ENCODE measurements at regions of chr4 and their contacts with region 1.

Region 1: DNA sequence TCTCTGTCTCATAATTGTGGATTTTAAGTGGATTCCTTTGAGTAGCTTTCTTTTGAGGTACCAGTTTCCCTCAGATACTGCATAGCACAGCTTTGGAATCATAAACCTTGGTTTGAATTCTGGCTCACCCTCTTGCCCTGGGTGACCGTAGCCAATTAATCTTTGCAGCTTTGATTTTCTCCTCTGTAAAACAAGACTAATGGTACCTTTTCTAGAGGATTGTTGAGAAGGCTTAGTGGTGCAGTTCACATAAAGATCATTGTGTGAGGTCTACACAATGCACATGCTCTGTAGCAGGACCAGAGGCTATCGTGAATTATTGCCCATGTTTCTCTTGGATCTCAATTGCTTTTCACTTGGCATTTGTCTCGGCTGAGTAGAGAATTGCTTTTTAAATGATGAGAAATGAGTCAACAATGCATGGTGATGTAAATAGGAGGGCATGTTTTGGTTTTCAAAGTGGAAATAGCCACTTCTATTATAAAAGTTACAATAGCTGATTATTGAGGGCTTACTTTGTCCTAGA is 47.9 kb downstream of the TMEM131L start:
- DNase-seq: no peak
- H3K4me3 Mint-ChIP-seq: no peak overlapping the region
- H3K27ac Mint-ChIP-seq: no peak overlapping the region
- H3K4me1 Mint-ChIP-seq: peaks cover 51% of the 10 kb centered on the region
- H3K27me3 Mint-ChIP-seq: no peaks in the 10 kb centered on the region

Region 2: GRCh38 chr4:153383131-153383530 is 130.9 kb before region 1 on chr4:
- CTCF ChIA-PET with region 1: no interaction called
- POLR2A ChIA-PET with region 1: no interaction called
- DNase-seq: no peak
- H3K4me3 Mint-ChIP-seq: no peak overlapping the region
- H3K27ac Mint-ChIP-seq: no peak overlapping the region
- H3K4me1 Mint-ChIP-seq: no peaks in the 10 kb centered on the region
- H3K27me3 Mint-ChIP-seq: no peaks in the 10 kb centered on the region

Region 3: GRCh38 chr4:153497988-153498967 is 15.8 kb before region 1 on chr4:
- CTCF ChIA-PET with region 1: interaction called, 12 read pairs
- POLR2A ChIA-PET with region 1: no interaction called
- DNase-seq: no peak
- H3K4me3 Mint-ChIP-seq: peak overlapping the region; percentile 66
- H3K27ac Mint-ChIP-seq: peak overlapping the region; percentile 97
- H3K4me1 Mint-ChIP-seq: peaks cover 90% of the 10 kb centered on the region
- H3K27me3 Mint-ChIP-seq: no peaks in the 10 kb centered on the region

Measured in activated CD4-positive, alpha-beta T cell treated with anti-CD3 and anti-CD28 coated beads, Interleukin-2, amount 10 ng/mL, durations not matched to agents 7 days and 5 days (primary cell).